Heart left ventricle (tissue), 16 donors: ENCODE measurements at regions of chr12 and their contacts with region 1.

Region 1: GRCh38 chr12:93060666-93061471 is 131.8 kb upstream of the EEA1 start:
- DNase-seq: peak in 4 of 5 donors; percentile 39 to 56 (median 48)
- ATAC-seq: peak; percentile 38 to 75 (median 60)
- H3K4me3 ChIP-seq: peak overlapping the region in 6 of 12 donors; percentile 2 to 35 (median 24)
- H3K27ac ChIP-seq: peak overlapping the region; percentile 62 to 94 (median 82)
- H3K4me1 ChIP-seq: peaks cover 0 to 40% (median 23%) of the 10 kb centered on the region in 12 donors
- H3K27me3 ChIP-seq: no peaks in the 10 kb centered on the region
- CTCF ChIP-seq: peak in 3 of 12 donors; percentile 30 to 32 (median 31)
- POLR2A ChIP-seq: no peak

Region 2: DNA sequence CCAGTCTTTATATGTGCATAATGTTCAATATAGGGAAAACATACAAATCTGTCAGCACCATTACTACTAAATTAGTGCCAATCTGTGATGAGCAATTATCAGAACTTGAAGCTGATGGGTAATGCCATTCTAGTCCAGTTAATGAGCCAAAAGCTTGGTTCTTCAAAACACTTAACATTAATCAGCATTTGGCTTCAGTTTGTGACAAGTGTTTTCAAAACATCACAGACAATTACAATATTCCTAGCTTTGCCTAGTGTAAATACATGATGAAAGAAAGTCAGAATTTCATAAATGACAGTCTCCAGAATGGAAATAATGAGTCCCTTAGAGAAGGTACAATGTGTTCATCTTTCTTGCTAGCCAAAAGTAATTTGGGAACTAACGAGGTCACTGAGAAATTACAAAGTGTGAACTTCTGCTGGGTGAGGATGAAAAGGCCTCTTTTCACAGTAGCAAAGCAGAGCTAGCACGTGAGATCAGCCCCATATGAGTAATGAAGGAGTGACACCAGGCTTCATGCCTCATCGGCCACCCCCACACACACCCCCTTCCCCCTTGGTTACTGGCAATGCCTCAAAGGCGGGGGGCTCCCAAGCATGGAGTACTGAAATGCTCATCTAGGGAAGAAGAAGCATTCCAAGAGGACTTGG is 48.8 kb after region 1 on chr12:
- intact Hi-C with region 1: loop called in 2 of 10 experiments (anchors 5 kb)
- DNase-seq: no peak
- ATAC-seq: peak in 3 of 4 donors; percentile 7 to 28 (median 20)
- H3K4me3 ChIP-seq: no peak overlapping the region
- H3K27ac ChIP-seq: peak overlapping the region in 6 of 12 donors; percentile 10 to 57 (median 39)
- H3K4me1 ChIP-seq: peaks cover 3 to 48% (median 30%) of the 10 kb centered on the region in 12 donors
- H3K27me3 ChIP-seq: no peaks in the 10 kb centered on the region
- CTCF ChIP-seq: no peak
- POLR2A ChIP-seq: no peak